Activated T-helper 1 cell treated with anti-CD3 and anti-CD28 coated beads, Interleukin-12 subunit alpha, Interleukin-12 subunit beta, Interleukin-2, Interleukin-4 antibody, amounts not matched to agents 30 ng/mL and 10 ng/mL and 1 ng/mL, durations not matched to agents 14 hours and 24 hours and 36 hours (primary cell): ENCODE measurements at regions of chr21 and their contacts with region 1.

Region 1: GRCh38 chr21:45973659-45974072 is 7.9 kb upstream of the COL6A1 start:
- DNase-seq: peak; percentile 64
- H3K4me3 Mint-ChIP-seq: peak overlapping the region; percentile 83
- H3K27ac Mint-ChIP-seq: peak overlapping the region; percentile 67
- H3K4me1 Mint-ChIP-seq: peaks cover 7% of the 10 kb centered on the region
- H3K27me3 Mint-ChIP-seq: peaks cover 31% of the 10 kb centered on the region

Region 2: GRCh38 chr21:46048926-46049889 is 75.5 kb after region 1 on chr21:
- intact Hi-C with region 1: no loop called
- DNase-seq: no peak
- H3K4me3 Mint-ChIP-seq: no peak overlapping the region
- H3K27ac Mint-ChIP-seq: no peak overlapping the region
- H3K4me1 Mint-ChIP-seq: peaks cover 6% of the 10 kb centered on the region
- H3K27me3 Mint-ChIP-seq: peaks cover 3% of the 10 kb centered on the region

Region 3: DNA sequence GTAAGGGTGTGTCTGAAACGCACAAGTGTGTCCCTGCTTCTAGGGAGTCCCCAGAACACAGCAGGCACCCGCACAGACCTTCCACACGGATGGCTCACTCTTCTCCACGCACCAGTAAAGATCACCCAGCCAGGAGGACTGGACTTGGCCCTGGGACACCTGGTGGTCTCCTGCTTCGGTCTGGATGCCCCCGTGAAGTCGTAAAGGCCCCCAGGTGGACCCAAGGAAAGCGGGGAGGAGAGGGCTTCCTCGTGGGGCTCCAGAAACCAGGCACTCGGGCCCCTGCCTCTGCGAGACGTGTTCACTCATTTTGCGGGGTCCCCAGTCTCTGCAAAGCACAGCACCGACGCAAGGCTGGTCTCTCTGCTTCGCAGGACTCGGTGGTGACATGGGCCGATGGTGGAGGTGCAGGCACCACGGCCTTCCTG is 104.0 kb after region 1 on chr21:
- intact Hi-C with region 1: no loop called
- DNase-seq: no peak
- H3K4me3 Mint-ChIP-seq: no peak overlapping the region
- H3K27ac Mint-ChIP-seq: no peak overlapping the region
- H3K4me1 Mint-ChIP-seq: no peaks in the 10 kb centered on the region
- H3K27me3 Mint-ChIP-seq: peaks cover 3% of the 10 kb centered on the region

Region 4: GRCh38 chr21:46097336-46098293 is 123.9 kb after region 1 on chr21 and contains the start of gene COL6A2:
- intact Hi-C with region 1: loop called (anchors 5 kb)
- DNase-seq: no peak
- H3K4me3 Mint-ChIP-seq: peak within 1 kb of the TSS; percentile 59
- H3K27ac Mint-ChIP-seq: no peak within 1 kb of the TSS
- H3K4me1 Mint-ChIP-seq: no peaks in the 10 kb centered on the region
- H3K27me3 Mint-ChIP-seq: peaks cover 32% of the 10 kb centered on the region
- total RNA-seq, gene COL6A2: 1.4 and 2.1 TPM in 2 replicates

Region 5: GRCh38 chr21:46184625-46185555 is 211.2 kb after region 1 on chr21:
- intact Hi-C with region 1: loop called (anchors 1 kb)
- DNase-seq: peak; percentile 72
- H3K4me3 Mint-ChIP-seq: peak overlapping the region; percentile 85
- H3K27ac Mint-ChIP-seq: peak overlapping the region; percentile 71
- H3K4me1 Mint-ChIP-seq: no peaks in the 10 kb centered on the region
- H3K27me3 Mint-ChIP-seq: no peaks in the 10 kb centered on the region